ENCODE measurements at regions of chr16 and their contacts with region 1.

Region 1: GRCh38 chr16:79863128-79864031 is 262.8 kb upstream of the MAF start:
- DNase-seq: no peak
- ATAC-seq: no peak
- H3K4me3 ChIP-seq: no peak overlapping the region
- H3K27ac ChIP-seq: no peak overlapping the region
- H3K4me1 ChIP-seq: no peaks in the 10 kb centered on the region
- H3K27me3 ChIP-seq: no peaks in the 10 kb centered on the region

Region 2: GRCh38 chr16:79740252-79740651 is 123.1 kb before region 1 on chr16:
- intact Hi-C with region 1: no loop called
- DNase-seq: no peak
- ATAC-seq: no peak
- H3K4me3 ChIP-seq: no peak overlapping the region
- H3K27ac ChIP-seq: no peak overlapping the region
- H3K4me1 ChIP-seq: no peaks in the 10 kb centered on the region
- H3K27me3 ChIP-seq: no peaks in the 10 kb centered on the region

Region 3: DNA sequence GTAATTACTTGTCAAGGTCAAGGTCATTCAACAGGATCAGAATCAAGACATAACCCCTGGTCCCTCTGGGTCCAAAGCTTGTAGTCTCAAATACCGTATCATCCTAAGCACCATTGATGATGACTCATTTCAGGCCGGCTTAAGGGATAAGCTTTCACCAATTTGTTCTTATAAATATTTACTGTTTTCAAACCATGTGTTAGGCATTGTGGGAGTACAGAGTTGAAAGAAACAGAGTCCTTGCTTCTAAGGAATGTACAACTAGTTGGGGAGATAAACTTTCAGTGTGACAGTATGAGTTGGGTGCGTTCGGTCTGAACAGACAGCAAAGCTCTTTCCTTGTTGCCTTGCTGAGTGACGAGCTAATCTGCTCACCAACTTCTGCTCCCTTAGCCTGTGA is 79.4 kb before region 1 on chr16:
- intact Hi-C with region 1: loop called in 1 of 2 experiments (anchors 10 kb)
- DNase-seq: no peak
- ATAC-seq: no peak
- H3K4me3 ChIP-seq: no peak overlapping the region
- H3K27ac ChIP-seq: no peak overlapping the region
- H3K4me1 ChIP-seq: no peaks in the 10 kb centered on the region
- H3K27me3 ChIP-seq: no peaks in the 10 kb centered on the region

Region 4: DNA sequence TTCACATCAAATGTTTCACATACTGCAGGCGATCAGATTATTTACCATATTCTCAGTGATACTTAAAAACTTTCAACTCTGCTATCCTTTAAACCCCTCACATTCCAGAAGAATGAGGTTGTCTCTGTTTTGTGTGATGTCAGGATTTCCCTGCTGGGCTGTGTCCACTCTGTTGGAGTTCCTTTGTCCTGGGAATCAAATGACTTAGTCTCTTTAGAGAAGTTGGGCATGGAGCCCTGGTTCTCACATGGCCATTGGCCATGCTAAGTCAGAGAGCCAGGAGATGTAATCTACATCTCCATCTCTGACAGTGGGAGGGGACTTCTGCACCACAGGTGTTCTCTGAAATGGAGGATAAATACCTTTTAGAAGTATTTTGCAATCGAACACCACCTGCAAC is 57.8 kb before region 1 on chr16:
- intact Hi-C with region 1: no loop called
- DNase-seq: no peak
- ATAC-seq: no peak
- H3K4me3 ChIP-seq: no peak overlapping the region
- H3K27ac ChIP-seq: no peak overlapping the region
- H3K4me1 ChIP-seq: no peaks in the 10 kb centered on the region
- H3K27me3 ChIP-seq: no peaks in the 10 kb centered on the region

Measured in aorta (tissue), 5 donors.